ENCODE measurements at regions of chr6 and their contacts with region 1.

Region 1: GRCh38 chr6:163489584-163489983 is 75.1 kb downstream of the QKI start:
- DNase-seq: no peak
- H3K4me3 Mint-ChIP-seq: no peak overlapping the region
- H3K27ac Mint-ChIP-seq: no peak overlapping the region
- H3K4me1 Mint-ChIP-seq: peaks cover 59% of the 10 kb centered on the region
- H3K27me3 Mint-ChIP-seq: no peaks in the 10 kb centered on the region

Region 2: DNA sequence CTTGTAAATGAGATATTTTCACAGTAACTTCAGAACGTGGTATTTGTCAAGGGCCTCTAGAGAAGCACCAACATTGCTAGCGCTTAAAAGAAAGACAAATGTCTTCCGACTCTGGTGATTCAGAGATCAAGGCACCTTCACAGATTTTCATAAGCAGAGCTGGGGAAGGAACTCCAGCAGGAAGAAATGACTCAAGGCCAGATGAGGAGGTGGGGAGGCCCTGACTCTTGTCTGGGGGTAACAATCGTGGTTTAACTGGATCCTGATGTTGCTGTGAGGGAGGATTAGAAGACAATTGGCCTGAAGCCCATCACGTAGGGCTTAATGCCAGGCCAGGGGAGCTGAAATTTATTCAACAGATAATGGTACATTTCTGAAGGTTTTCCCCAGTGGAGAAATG is 198.0 kb before region 1 on chr6:
- CTCF ChIA-PET with region 1: no interaction called
- intact Hi-C with region 1: no loop called
- DNase-seq: no peak
- H3K4me3 Mint-ChIP-seq: no peak overlapping the region
- H3K27ac Mint-ChIP-seq: no peak overlapping the region
- H3K4me1 Mint-ChIP-seq: no peaks in the 10 kb centered on the region
- H3K27me3 Mint-ChIP-seq: no peaks in the 10 kb centered on the region

Region 3: DNA sequence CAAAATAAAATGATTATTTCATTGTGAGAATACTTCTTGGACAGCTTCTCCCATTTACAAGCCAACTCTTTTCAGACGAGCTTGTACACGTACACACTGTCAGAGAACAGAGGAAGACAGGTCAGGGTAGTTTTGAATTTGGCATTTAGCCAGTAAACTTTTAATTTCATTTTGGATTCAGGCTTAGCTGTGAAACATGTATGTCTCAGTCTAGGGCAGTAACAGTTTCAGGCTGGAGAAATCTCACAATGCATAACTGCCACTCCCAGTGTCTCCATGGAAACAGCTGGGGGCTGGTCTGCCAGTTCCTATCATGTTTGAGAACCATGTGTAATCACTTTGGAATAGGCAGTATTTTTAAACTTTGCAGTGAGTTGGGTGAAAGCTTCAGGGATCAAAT is 97.1 kb before region 1 on chr6:
- CTCF ChIA-PET with region 1: no interaction called
- intact Hi-C with region 1: no loop called
- DNase-seq: no peak
- H3K4me3 Mint-ChIP-seq: no peak overlapping the region
- H3K27ac Mint-ChIP-seq: no peak overlapping the region
- H3K4me1 Mint-ChIP-seq: peaks cover 6% of the 10 kb centered on the region
- H3K27me3 Mint-ChIP-seq: peaks cover 19% of the 10 kb centered on the region

Region 4: DNA sequence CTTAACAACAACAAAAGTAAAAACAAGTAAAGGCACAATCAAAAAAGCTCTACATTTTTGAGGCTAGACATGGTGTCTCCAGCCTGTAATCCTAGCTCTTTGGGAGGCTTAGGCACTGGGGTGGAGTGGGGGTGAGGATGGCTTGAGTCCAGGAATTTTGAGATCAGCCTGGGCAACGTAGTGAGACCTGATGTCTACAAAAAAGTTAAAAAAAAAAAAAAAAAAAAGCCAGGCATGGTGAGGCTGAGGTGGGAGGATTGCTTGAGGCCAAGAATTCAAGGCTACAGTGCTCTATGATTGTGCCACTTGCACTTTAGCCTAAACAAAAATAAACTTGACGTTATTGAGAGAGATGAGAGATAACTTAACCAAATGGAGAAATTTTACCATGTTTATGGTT is 15.0 kb before region 1 on chr6:
- CTCF ChIA-PET with region 1: no interaction called
- intact Hi-C with region 1: loop called (anchors 2 kb)
- DNase-seq: no peak
- H3K4me3 Mint-ChIP-seq: no peak overlapping the region
- H3K27ac Mint-ChIP-seq: no peak overlapping the region
- H3K4me1 Mint-ChIP-seq: peaks cover 8% of the 10 kb centered on the region
- H3K27me3 Mint-ChIP-seq: no peaks in the 10 kb centered on the region